WTC11 (cell line): ENCODE measurements at regions of chr1 and their contacts with region 1.

Region 1: GRCh38 chr1:36516372-36517325 is 33.9 kb upstream of the CSF3R start:
- DNase-seq: peak; percentile 67
- ATAC-seq: peak; percentile 81
- H3K4me3 Mint-ChIP-seq: no peak overlapping the region
- H3K27ac Mint-ChIP-seq: no peak overlapping the region
- H3K4me1 Mint-ChIP-seq: peaks cover 18% of the 10 kb centered on the region
- H3K27me3 Mint-ChIP-seq: no peaks in the 10 kb centered on the region; the same call in 1 of the 2 replicates
- CTCF ChIP-seq: peak; percentile 92

Region 2: DNA sequence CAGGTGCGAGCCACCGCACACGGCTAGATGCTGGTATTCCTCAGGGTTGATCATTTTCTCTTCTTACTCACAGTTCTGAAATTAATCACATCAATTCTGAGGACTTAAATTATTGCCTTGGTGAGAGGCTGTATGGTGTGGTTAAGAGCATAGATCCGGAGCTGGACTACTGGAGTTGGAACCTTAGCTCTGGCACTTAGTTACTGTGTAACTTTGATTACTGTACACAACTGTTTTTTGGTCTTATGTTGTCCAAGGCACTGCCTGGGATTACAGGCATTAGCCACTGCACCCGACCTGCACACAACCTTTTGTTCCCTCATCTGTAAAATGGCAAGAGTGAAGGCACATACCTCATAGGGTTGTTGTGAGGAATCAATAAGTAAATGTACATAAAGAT is 318.0 kb before region 1 on chr1:
- CTCF ChIA-PET with region 1: no interaction called
- POLR2A ChIA-PET with region 1: no interaction called
- DNase-seq: no peak
- ATAC-seq: no peak
- H3K4me3 Mint-ChIP-seq: no peak overlapping the region
- H3K27ac Mint-ChIP-seq: no peak overlapping the region
- H3K4me1 Mint-ChIP-seq: peaks cover 4% of the 10 kb centered on the region
- H3K27me3 Mint-ChIP-seq: no peaks in the 10 kb centered on the region; the same call in 1 of the 2 replicates
- CTCF ChIP-seq: no peak

Region 3: DNA sequence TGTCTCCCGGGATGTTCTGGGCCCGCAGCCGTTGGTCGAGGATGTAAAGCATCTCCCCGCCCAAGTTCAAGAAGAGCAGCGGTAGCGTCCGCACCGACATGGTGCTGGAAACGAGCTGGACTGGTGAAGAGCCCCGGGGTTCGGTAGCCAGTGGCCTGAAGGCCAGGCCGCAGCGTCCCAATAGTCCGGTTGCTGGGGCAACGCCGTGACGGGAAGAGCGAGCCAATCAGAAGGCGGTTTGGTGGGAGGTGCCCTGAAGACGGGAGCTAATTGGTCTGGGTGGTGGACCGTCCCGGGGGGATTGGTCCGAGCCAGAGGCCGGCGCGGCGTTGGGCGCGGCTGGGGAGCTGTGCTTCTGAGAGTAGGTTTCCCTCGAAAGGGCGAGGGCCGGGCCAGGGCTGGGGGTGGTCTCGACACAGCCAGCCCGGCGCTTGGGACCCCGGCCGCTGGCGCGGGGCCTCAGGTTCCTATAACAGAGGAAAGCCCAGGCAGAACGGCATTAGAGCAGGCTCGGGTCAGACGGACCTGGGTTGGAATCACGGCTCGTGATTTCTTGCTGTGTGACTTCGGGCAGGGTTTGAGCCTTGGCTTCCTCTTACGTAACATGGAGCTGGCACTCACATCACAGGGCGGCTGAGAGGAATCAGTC is 66.3 kb before region 1 on chr1 and contains the start of gene OSCP1:
- CTCF ChIA-PET with region 1: interaction called, 13 read pairs
- POLR2A ChIA-PET with region 1: no interaction called
- DNase-seq: peak; percentile 93
- ATAC-seq: peak; percentile 95
- H3K4me3 Mint-ChIP-seq: peak within 1 kb of the TSS; percentile 77
- H3K27ac Mint-ChIP-seq: peak within 1 kb of the TSS; percentile 58; the same call in 1 of the 2 replicates
- H3K4me1 Mint-ChIP-seq: peaks cover 18% of the 10 kb centered on the region
- H3K27me3 Mint-ChIP-seq: peaks cover 4% of the 10 kb centered on the region
- CTCF ChIP-seq: no peak
- total RNA-seq, gene OSCP1: 1.7 to 2.3 TPM (median 2.0 TPM) in 3 replicates

Region 4: GRCh38 chr1:36506276-36506920 is 10.3 kb before region 1 on chr1:
- CTCF ChIA-PET with region 1: interaction called, 21 read pairs
- POLR2A ChIA-PET with region 1: no interaction called
- DNase-seq: no peak
- ATAC-seq: no peak
- H3K4me3 Mint-ChIP-seq: no peak overlapping the region
- H3K27ac Mint-ChIP-seq: no peak overlapping the region
- H3K4me1 Mint-ChIP-seq: peaks cover 3% of the 10 kb centered on the region
- H3K27me3 Mint-ChIP-seq: no peaks in the 10 kb centered on the region; the same call in 1 of the 2 replicates
- CTCF ChIP-seq: no peak

Region 5: GRCh38 chr1:36542962-36543515 is 26.4 kb after region 1 on chr1:
- CTCF ChIA-PET with region 1: interaction called, 38 read pairs
- POLR2A ChIA-PET with region 1: no interaction called
- DNase-seq: peak; percentile 50
- ATAC-seq: peak; percentile 96
- H3K4me3 Mint-ChIP-seq: no peak overlapping the region
- H3K27ac Mint-ChIP-seq: no peak overlapping the region
- H3K4me1 Mint-ChIP-seq: no peaks in the 10 kb centered on the region
- H3K27me3 Mint-ChIP-seq: peaks cover 12% of the 10 kb centered on the region
- CTCF ChIP-seq: no peak

Region 6: GRCh38 chr1:36585569-36586548 is 69.2 kb after region 1 on chr1:
- CTCF ChIA-PET with region 1: interaction called, 15 read pairs
- POLR2A ChIA-PET with region 1: no interaction called
- DNase-seq: no peak
- ATAC-seq: no peak; the same call in 1 of the 2 replicates
- H3K4me3 Mint-ChIP-seq: no peak overlapping the region
- H3K27ac Mint-ChIP-seq: no peak overlapping the region
- H3K4me1 Mint-ChIP-seq: peaks cover 74% of the 10 kb centered on the region
- H3K27me3 Mint-ChIP-seq: no peaks in the 10 kb centered on the region; the same call in 1 of the 2 replicates
- CTCF ChIP-seq: no peak

Region 7: DNA sequence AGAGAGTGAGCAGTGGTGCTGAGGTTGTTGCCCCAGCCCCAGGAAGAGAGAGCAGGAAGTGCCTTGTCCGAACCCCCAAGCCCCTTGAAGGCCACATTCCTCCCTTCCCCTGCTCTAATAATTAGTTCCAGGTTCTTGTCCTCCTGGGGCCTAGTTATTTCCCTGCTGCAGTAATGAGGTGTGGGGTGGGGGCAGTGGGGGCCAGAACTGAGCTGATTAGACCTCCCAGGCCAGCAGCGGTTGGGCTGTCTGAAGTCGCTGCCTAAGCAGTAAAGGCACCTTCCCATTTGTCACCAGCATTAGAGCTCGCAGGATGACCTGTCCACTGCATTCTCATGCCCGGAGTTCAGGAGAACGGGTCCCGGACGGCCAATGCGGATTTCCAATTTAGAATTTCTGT is 152.6 kb after region 1 on chr1:
- CTCF ChIA-PET with region 1: interaction called, 10 read pairs
- POLR2A ChIA-PET with region 1: no interaction called
- DNase-seq: no peak
- ATAC-seq: no peak
- H3K4me3 Mint-ChIP-seq: no peak overlapping the region
- H3K27ac Mint-ChIP-seq: no peak overlapping the region
- H3K4me1 Mint-ChIP-seq: no peaks in the 10 kb centered on the region
- H3K27me3 Mint-ChIP-seq: peaks cover 8% of the 10 kb centered on the region
- CTCF ChIP-seq: no peak